GM10248 (cell line): ENCODE measurements at regions of chr19 and their contacts with region 1.

Region 1: GRCh38 chr19:46513461-46514236 is 18.0 kb upstream of the PNMA8B start:
- DNase-seq: peak; percentile 83
- CTCF ChIP-seq: peak; percentile 89

Region 2: GRCh38 chr19:46279177-46279576 is 234.5 kb before region 1 on chr19:
- CTCF ChIA-PET with region 1: interaction called, 16 read pairs
- POLR2A ChIA-PET with region 1: no interaction called
- DNase-seq: no peak
- CTCF ChIP-seq: no peak

Region 3: GRCh38 chr19:46392243-46392801 is 121.3 kb before region 1 on chr19:
- CTCF ChIA-PET with region 1: interaction called, 20 read pairs
- POLR2A ChIA-PET with region 1: no interaction called
- DNase-seq: no peak
- CTCF ChIP-seq: no peak

Region 4: GRCh38 chr19:46404055-46404752 is 109.4 kb before region 1 on chr19:
- CTCF ChIA-PET with region 1: interaction called, 10 read pairs
- POLR2A ChIA-PET with region 1: no interaction called
- DNase-seq: no peak
- CTCF ChIP-seq: no peak

Region 5: DNA sequence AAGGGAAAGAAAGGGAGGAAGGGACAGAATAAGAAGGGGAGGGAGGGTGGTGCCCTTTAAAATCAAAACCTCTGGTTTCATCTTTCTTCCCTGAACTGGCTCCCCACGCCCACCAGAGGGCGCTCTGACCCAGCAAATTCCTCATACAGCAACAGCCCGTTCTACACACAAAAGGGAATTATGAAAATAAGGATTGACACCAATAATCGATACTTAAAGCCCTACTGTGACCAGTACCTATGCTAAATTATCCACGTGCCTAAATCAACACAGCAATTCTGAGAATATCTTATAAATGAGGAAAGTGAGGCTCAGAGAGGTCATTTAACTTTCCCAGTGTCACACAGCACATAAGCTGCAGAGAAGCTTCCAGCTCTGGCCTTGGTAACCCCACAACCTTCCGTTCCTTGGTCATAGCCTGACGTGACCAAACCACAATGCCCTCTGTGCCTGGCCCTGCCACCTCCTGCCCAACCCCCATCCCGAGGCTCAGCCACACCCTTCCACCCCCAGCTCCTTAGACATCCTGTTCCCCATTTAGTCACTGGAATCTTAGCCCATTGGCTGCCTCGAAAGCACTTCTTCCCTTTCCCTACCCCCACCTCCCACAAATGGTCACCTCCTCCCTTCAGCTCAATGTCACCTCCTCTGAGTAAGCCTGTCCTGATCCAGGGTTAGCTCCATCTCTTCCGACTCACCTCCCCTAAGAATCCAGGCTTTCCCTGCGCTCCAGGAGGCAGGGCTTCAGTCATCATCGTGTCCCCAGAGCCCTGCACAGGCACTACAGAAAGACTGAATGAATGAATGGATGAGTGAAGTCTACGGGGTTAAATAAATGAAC is 16.2 kb after region 1 on chr19:
- CTCF ChIA-PET with region 1: interaction called, 18 read pairs
- POLR2A ChIA-PET with region 1: no interaction called
- DNase-seq: peak; percentile 82
- CTCF ChIP-seq: peak; percentile 87

Region 6: GRCh38 chr19:46537136-46538097 is 23.8 kb after region 1 on chr19:
- CTCF ChIA-PET with region 1: interaction called, 18 read pairs
- POLR2A ChIA-PET with region 1: no interaction called
- DNase-seq: peak; percentile 58
- CTCF ChIP-seq: peak; percentile 79

Region 7: GRCh38 chr19:46542428-46543230 is 29.0 kb after region 1 on chr19:
- CTCF ChIA-PET with region 1: interaction called, 18 read pairs
- POLR2A ChIA-PET with region 1: no interaction called
- DNase-seq: peak; percentile 76
- CTCF ChIP-seq: peak; percentile 78

Region 8: DNA sequence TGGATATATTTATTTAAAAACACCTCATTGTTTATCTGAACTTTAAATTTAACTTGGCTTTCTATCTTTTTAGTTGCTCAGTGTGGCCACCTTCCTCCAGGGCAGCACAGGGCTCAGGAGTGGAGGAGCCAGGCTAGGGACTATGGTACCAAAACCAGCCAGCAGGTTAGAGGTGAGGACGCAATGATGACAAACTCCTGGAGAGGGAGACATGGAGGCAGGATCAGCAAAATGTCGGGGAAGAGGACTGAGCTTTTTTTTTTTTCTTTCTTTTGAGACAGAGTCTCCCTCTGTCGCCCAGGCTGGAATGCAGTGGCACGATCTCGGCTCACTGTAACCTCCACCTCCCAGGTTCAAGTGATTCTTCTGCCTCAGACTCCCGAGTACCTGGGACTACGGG is 57.9 kb after region 1 on chr19:
- CTCF ChIA-PET with region 1: no interaction called
- POLR2A ChIA-PET with region 1: no interaction called
- DNase-seq: no peak
- CTCF ChIP-seq: no peak

Region 9: DNA sequence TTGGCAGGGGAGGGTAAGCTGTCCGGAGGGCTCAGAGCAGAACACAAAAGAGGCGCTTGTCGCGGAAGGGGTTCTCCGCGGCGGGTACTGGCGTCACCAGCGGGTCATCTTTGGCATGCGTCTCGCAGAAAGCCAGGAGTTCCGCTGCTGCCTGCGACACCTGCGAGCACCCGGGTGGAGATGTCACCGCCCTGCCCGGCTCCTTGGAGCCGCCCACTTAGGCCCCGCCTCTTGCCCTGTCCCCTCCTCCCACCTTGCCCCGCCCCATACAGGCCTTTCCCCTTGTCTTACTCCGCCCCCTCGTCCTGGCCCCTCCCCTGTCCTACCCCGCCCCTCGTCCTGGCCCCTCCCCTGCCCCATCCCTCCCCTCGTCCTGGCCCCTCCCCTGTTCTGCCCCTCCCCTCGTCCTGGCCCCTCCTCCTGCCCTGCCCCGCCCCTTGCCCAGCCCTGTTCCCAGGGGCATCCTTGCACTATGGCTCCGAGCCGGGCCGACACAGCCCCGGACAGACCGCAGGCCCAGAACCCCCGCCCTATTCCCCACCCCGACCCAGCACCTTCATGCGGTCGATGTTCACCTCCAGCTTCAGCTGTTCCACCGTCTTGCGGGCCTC is 120.5 kb after region 1 on chr19:
- CTCF ChIA-PET with region 1: no interaction called
- POLR2A ChIA-PET with region 1: no interaction called
- DNase-seq: peak; percentile 95
- CTCF ChIP-seq: no peak